HEK293 (cell line): ENCODE measurements at regions of chr2 and their contacts with region 1.

Region 1: DNA sequence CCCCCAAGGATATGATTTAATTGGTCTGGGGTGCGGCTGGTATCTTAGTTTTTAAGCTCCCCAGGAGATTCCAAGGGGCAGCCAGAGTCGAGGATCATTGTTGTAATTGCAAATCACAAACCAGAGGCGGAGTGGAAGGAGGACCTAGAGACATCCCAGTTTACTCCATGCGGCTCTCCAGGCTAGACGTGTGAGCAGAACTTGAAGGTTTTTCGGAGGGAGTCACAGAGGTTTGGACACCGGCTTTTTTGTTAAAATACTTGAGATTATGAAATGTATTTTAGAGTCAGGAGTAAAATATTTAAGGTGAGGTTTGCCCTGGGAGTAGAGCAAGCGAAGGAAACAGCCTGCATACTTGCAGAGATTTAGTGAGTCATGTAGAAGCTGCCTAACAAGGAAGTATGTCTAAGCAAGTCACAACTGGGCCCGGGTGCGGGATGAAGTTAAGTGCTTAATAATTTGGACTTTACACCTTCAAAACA is 39.5 kb downstream of the TGOLN2 start:
- H3K4me3 ChIP-seq: no peak overlapping the region
- H3K27ac ChIP-seq: no peak overlapping the region
- H3K4me1 ChIP-seq: no peaks in the 10 kb centered on the region
- CTCF ChIP-seq: no peak

Region 2: DNA sequence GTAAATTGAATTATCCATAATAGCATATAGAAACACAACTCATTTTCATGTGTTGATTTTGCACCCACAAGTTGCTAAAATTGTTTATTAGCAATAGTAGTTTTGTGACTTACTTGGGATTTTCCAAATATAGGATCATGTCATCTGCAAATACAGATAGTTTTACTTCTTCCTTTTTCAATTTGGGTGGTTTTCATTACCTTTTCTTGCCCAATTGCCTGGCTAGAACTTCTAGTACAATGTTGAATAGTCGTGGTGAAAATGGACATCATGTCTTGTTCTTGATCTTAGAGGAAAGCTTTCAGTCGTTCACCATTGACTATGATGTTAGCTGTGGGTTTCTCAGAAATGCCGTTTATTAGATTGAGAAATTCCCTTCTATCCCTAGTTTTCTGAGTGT is 215.3 kb before region 1 on chr2:
- CTCF ChIA-PET with region 1: interaction called, 137 read pairs
- POLR2A ChIA-PET with region 1: no interaction called
- H3K4me3 ChIP-seq: no peak overlapping the region
- H3K27ac ChIP-seq: no peak overlapping the region
- H3K4me1 ChIP-seq: no peaks in the 10 kb centered on the region
- CTCF ChIP-seq: no peak

Region 3: DNA sequence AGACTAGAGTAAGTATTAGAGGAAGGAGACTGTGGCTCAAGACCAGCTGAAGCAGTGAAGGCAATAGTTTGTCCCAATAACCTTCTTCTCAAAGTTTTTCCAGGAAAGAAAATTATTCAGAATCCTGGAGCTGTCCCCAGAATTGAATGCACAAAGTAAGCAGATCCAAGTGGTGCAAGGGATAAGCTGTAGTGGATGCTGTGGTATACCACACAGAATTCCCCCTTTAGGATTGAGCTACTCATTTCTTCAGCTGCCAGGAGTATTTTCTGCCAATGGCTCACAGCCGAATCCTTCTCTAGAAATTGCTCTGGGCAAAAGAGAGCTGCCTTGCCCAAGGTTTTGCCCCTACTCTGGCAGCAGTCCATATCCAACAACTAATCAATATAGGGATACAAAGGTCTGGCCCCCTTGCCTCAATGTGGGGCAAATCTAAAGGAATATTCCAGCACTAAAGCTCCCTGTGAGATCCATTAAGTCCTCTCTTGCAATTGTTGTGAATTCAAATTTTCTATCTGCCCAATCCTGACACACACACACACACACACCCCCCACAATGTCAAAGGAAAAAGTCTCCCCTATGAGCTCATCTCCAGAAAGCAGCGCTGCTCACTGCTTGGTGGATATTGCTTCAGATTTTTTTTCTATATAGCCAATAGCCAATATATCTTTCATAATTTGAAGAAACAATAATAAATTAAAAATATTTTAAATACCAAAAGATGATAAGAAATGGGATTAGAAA is 173.5 kb before region 1 on chr2:
- CTCF ChIA-PET with region 1: interaction called, 11 read pairs
- POLR2A ChIA-PET with region 1: no interaction called
- H3K4me3 ChIP-seq: no peak overlapping the region
- H3K27ac ChIP-seq: no peak overlapping the region
- H3K4me1 ChIP-seq: no peaks in the 10 kb centered on the region
- CTCF ChIP-seq: no peak

Region 4: GRCh38 chr2:85273738-85274731 is 14.2 kb before region 1 on chr2:
- CTCF ChIA-PET with region 1: interaction called, 17 read pairs
- POLR2A ChIA-PET with region 1: no interaction called
- H3K4me3 ChIP-seq: no peak overlapping the region
- H3K27ac ChIP-seq: no peak overlapping the region
- H3K4me1 ChIP-seq: 0 out of 2 replicates have a peak, but pooled peaks cover 3% of the 10 kb centered on the region
- CTCF ChIP-seq: no peak

Region 5: DNA sequence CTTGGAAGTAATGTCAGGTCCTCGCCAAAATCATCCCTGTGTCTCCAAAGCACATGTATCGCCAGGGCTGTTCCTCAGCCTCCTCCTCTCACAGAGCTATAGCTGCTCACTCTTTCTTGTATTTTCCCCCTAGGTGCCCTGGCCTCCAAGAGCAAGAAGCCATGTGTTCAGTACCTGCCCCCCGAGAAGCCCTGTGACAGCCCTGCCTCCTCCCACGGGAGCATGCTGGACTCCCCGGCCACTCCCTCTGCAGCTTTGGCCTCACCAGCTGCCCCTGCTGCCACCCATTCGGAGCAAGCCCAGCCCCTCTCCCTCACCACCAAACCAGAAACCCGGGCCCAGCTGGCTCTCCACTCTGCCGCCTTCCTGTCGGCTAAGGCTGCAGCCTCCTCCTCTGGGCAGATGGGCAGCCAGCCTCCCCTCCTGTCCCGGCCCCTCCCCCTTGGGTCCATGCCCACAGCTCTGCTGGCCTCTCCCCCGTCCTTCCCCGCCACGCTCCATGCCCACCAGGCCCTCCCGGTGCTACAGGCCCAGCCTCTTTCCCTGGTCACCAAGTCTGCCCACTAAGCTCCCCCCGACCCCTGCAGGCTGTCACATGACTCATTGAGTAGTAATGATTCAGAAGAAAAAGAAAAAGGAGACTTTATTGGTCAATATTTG is 20.7 kb after region 1 on chr2:
- CTCF ChIA-PET with region 1: no interaction called
- POLR2A ChIA-PET with region 1: no interaction called
- H3K4me3 ChIP-seq: no peak overlapping the region
- H3K27ac ChIP-seq: no peak overlapping the region
- H3K4me1 ChIP-seq: no peaks in the 10 kb centered on the region
- CTCF ChIP-seq: no peak

Region 6: DNA sequence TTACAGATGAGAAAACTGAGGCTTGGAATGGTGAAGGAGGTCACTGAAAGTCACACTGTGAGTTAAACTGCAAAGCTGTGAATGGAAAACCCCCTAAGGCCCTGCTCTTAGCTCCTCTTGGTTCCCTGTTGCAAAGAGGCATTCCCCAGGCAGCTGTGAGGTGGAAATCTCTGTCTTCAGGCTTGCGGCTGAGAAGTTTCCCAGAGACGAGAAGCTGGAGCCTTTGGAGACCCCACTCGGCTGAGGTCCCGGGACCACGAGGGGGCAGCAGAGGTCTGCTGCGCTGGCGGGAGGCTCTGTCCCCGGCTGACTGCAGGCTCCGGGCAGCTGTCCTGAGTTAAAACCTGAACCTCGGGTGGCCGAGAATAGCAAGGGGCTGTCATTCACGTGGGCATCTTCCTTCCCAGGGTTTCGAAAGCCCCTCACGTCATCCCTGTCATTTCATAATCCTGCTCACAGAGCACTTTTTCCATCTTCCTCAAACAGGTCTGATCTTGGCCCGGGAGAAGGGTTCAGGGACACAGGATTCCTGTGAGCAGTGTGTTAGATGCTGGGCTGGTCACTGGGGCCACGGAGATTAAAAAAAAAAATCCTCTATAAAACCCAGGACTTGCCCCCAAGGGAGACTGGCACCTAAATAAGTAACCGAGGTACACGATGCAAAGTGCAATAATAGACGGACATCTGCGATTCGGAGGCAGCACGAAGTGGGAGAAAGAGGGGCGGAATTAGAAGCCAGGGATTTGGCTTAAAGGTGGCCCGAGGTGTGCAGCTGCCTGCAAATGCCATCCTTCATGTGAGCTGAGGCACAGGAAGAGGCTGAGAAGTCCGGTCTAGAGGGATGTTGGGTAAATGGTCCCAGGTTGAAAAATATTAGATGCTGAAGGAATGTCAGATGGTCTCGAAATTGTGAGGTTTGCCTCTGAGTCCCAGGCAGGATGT is 440.9 kb after region 1 on chr2:
- CTCF ChIA-PET with region 1: no interaction called
- POLR2A ChIA-PET with region 1: no interaction called
- H3K4me3 ChIP-seq: no peak overlapping the region
- H3K27ac ChIP-seq: no peak overlapping the region
- H3K4me1 ChIP-seq: peaks cover 2% of the 10 kb centered on the region
- CTCF ChIP-seq: peak; percentile 93